ENCODE measurements at regions of chr11 and their contacts with region 1.

Region 1: DNA sequence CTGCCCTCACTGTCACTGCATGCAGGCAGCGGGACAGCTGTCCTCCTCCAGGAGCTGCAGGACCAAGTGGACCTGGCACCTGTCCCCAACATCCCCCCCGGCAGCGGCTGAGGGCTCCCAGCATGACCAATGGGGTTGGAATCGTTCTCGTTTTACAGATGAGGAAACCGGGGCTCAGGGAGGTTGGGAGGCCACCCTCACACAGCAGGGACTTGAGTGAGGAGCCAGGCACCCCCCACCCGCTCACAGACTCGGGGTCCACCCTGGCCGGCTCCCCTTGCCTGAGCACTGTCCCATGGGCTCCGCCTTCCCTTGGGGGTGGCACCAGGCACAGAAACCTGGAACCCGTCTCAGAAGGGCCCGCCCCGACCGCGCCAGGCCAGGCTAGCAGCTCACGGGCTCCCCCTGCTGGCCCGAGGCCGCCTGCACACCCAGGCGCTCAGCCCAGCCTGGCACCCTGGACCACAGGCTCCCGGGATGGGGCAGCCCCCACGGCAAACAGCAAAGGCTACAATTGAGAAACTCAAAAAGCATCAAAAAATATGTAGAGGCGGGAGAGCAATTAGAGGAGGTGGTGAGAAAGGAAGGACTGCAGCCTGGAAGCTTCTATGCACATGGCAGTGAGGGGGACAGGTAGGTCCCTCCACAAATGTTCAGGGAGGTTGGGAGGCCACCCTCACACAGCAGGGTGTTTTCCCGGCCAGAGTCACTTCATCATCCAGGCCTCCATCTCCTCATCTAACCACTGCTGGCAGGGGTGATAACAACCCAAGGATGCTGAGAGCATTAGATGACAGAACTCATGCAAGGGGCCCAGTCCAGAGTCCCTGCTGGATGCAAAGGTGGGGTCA is 12.8 kb downstream of the MACROD1 start:
- DNase-seq: peak; percentile 66 to 89 (median 88)
- ATAC-seq: peak; percentile 54 to 80
- H3K4me3 ChIP-seq: no peak overlapping the region
- H3K27ac ChIP-seq: no peak overlapping the region
- H3K4me1 ChIP-seq: no peaks in the 10 kb centered on the region
- H3K27me3 ChIP-seq: no peaks in the 10 kb centered on the region

Region 2: GRCh38 chr11:63838678-63839507 is 314.2 kb before region 1 on chr11 and contains the start of gene MARK2:
- intact Hi-C with region 1: loop called in 3 of 4 experiments (anchors 5 to 10 kb)
- DNase-seq: peak; percentile 97 to 99 (median 99)
- ATAC-seq: peak; percentile 91 to 94
- H3K4me3 ChIP-seq: peak within 1 kb of the TSS; percentile 98
- H3K27ac ChIP-seq: peak within 1 kb of the TSS; percentile 87
- H3K4me1 ChIP-seq: peaks cover 16% of the 10 kb centered on the region
- H3K27me3 ChIP-seq: no peaks in the 10 kb centered on the region
- total RNA-seq, gene MARK2: 31.3 to 45.3 (median 41.1) TPM

Region 3: GRCh38 chr11:64000026-64000739 is 152.9 kb before region 1 on chr11:
- intact Hi-C with region 1: loop called (anchors 1 to 2 kb)
- DNase-seq: peak; percentile 72 to 91 (median 90)
- ATAC-seq: peak; percentile 84 to 89
- H3K4me3 ChIP-seq: peak overlapping the region; percentile 37
- H3K27ac ChIP-seq: no peak overlapping the region
- H3K4me1 ChIP-seq: peaks cover 4% of the 10 kb centered on the region
- H3K27me3 ChIP-seq: no peaks in the 10 kb centered on the region

Region 4: GRCh38 chr11:64015935-64016845 is 136.9 kb before region 1 on chr11:
- intact Hi-C with region 1: no loop called
- DNase-seq: no peak
- ATAC-seq: no peak
- H3K4me3 ChIP-seq: no peak overlapping the region
- H3K27ac ChIP-seq: no peak overlapping the region
- H3K4me1 ChIP-seq: no peaks in the 10 kb centered on the region
- H3K27me3 ChIP-seq: no peaks in the 10 kb centered on the region

Region 5: DNA sequence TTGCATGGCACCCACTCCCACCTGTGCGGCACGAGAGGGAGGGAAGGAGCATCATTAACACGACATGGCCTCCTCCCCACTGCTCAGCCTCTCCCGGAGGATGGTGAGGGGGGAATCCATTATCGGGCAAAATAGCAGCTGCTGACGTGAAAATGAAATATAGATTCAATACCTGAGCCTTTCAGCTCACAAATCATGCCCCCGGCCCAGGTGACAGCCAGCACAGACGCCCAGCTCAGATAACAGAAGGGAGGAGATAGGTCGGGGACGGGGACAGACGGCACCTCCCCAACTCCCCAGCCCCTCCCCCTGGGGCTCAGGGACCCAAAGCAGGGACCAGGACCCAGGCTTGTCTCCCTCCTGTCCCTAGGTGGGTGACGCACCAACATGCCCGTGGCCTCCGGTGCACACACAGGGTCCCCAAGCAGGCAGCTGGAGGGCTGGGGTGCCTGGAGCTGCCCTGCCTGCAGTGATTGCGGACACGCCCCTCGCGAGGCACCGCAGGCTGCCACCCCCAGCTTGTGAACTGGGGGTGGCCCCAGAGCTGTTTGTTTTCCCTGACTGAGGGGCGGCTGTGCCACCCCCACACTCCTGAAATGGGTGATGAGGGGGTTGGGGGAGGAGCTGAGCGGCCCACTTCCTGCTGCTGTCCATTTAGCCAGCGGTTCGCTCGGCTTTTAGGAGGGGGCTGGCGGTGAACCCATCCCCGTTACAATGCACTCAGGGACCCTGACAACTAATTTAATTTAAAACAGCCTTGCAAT is 85.7 kb before region 1 on chr11:
- intact Hi-C with region 1: no loop called
- DNase-seq: no peak
- ATAC-seq: no peak
- H3K4me3 ChIP-seq: no peak overlapping the region
- H3K27ac ChIP-seq: no peak overlapping the region
- H3K4me1 ChIP-seq: peaks cover 2% of the 10 kb centered on the region
- H3K27me3 ChIP-seq: no peaks in the 10 kb centered on the region

Region 6: GRCh38 chr11:64165849-64166635 is 13.0 kb after region 1 on chr11 and contains the start of gene MACROD1:
- intact Hi-C with region 1: no loop called
- DNase-seq: peak; percentile 88 to 96 (median 93)
- ATAC-seq: peak; percentile 92 to 94
- H3K4me3 ChIP-seq: peak within 1 kb of the TSS; percentile 86
- H3K27ac ChIP-seq: peak within 1 kb of the TSS; percentile 33
- H3K4me1 ChIP-seq: no peaks in the 10 kb centered on the region
- H3K27me3 ChIP-seq: no peaks in the 10 kb centered on the region
- total RNA-seq, gene MACROD1: 40.4 to 62.2 (median 52.6) TPM